ENCODE measurements at regions of chr12 and their contacts with region 1.

Region 1: DNA sequence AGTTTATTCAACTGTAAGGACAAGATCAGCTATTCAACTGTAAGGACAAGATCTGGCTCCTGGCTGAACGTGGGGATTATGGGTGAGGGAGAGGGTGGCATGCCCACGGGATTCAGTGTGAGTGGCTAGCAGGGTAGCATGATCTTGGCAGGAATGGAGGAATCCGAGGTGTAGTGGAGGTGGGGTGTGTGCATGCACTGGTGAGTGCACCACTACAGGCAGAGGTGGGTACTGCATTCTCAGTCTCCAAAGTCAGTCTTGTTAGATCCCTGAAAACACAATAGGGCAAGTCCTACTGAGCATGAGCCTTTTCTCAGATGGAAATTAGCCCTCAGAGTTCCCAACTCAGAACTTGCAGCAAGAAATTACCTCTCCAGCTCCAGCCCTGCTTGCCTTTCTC is 32.2 kb upstream of the DCD start:
- DNase-seq: peak; percentile 66
- ATAC-seq: peak; percentile 78
- H3K4me3 Mint-ChIP-seq: no peak overlapping the region
- H3K27ac Mint-ChIP-seq: no peak overlapping the region
- H3K4me1 Mint-ChIP-seq: no peaks in the 10 kb centered on the region
- H3K27me3 Mint-ChIP-seq: peaks cover 55% of the 10 kb centered on the region
- CTCF ChIP-seq: peak; percentile 65

Region 2: DNA sequence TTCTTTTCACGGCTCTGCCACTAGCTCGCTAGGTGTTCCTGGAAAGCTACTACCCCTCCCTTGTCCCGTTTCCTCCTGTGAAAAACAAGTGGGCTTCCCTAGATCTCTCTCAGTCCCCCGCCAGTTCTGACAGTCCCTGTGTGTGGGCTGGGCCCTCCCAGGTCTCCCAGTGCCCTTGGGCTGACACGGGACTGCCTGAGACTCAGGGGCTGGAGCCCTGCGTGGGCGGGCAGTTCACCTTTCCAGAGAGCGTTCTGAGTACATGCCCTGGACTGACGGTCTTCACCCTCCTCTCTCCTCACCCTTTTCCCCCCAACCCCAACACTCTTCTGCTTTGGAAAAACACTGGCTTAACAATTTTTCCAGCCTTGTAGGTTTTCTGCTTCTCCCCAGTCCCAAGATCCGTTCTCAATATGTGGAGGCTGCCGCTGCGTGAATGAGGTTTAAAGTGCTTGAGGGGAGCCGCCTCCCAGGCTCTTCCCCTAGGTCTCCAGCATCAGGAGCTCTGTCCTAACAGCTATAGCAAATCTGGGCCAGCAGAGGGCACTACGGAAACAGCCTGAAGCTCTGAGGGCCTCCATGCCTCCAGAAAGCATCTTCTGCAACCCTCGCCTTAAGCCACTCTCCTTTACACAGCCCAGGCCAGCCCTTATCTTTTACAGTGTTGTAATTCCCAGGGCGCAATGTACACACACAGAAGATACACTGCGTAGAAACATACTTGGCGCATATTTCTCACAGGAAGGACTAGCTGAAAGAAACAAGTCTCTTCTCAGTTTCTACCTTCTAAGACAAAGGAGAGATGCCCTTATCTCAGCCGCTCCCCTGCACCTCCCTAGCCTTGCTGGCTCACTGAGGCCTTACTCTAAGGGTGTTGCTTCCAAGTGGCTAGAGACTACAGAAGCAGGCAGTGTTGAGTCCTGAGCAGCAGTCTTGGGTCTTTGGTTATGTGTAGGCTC is 21.8 kb before region 1 on chr12:
- CTCF ChIA-PET with region 1: interaction called, 22 read pairs
- POLR2A ChIA-PET with region 1: no interaction called
- intact Hi-C with region 1: no loop called
- DNase-seq: peak; percentile 71
- ATAC-seq: peak; percentile 82
- H3K4me3 Mint-ChIP-seq: no peak overlapping the region
- H3K27ac Mint-ChIP-seq: no peak overlapping the region
- H3K4me1 Mint-ChIP-seq: no peaks in the 10 kb centered on the region
- H3K27me3 Mint-ChIP-seq: peaks cover 11% of the 10 kb centered on the region
- CTCF ChIP-seq: peak; percentile 53

Region 3: DNA sequence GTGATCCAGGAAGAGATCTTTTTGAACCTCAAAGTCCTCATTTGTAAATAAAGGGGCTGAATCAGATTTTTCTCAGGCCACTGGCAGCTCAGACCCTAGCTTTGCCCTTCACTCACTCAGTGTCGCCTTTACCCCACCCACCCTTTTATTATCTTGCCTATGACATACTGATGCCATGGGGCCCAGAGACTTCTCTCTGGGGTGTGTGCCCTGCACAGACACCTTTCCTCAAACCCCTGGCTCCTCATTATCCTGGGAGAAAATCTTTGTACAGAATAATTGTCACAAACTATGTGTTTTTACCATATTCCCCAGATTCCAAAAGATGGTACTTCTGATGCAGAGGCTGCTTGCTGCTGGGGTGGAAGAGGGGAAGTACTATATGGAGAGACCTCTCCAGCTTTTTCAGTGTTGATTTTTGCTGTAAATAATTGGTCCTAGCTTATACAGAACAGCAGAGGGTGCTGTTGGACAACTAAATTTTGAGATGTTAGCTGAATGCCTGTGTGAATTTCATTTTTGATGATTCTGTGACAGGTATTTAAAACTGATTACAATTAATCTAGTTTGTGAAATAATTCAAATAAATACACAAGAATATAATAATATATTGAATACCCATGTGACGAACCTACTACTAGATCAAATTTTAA is 21.7 kb after region 1 on chr12:
- CTCF ChIA-PET with region 1: interaction called, 10 read pairs
- POLR2A ChIA-PET with region 1: no interaction called
- intact Hi-C with region 1: no loop called
- DNase-seq: peak; percentile 24
- ATAC-seq: peak; percentile 47
- H3K4me3 Mint-ChIP-seq: no peak overlapping the region
- H3K27ac Mint-ChIP-seq: no peak overlapping the region
- H3K4me1 Mint-ChIP-seq: no peaks in the 10 kb centered on the region
- H3K27me3 Mint-ChIP-seq: peaks cover 4% of the 10 kb centered on the region
- CTCF ChIP-seq: peak; percentile 73

Measured in activated CD8-positive, alpha-beta T cell treated with anti-CD3 and anti-CD28 coated beads for 36 hours (primary cell).